Kidney (tissue), 22 donors: ENCODE measurements at regions of chr21 and their contacts with region 1.

Region 1: DNA sequence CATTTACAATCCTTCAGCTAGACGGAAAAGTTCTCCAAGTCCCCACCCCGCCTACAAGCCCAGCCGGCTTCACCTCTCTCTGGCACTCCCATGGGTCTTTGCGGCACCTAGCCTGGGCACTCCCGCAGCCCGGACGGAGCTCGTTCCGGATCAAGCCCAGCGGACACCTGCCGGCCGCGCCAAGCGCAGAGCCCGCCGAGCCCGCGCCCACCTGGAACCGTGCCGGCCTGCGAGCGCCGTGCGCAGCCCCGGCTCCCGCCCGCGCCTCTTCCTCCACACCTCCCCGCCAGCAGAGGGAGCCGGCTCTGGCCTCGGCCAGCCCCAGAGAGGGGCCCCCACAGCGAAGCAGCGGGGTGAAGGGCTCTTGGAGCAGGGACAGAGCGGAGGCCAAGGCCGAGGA is 50.0 kb upstream of the KRTAP19-8 start:
- DNase-seq: no peak
- H3K4me3 ChIP-seq: no peak overlapping the region
- H3K27ac ChIP-seq: no peak overlapping the region
- H3K4me1 ChIP-seq: no peaks in the 10 kb centered on the region
- H3K27me3 ChIP-seq: no peaks in the 10 kb centered on the region
- CTCF ChIP-seq: no peak

Region 2: GRCh38 chr21:30340441-30341241 is 747.7 kb before region 1 on chr21:
- intact Hi-C with region 1: loop called (anchors 10 kb)
- DNase-seq: peak in 3 of 5 donors; percentile 53 to 68 (median 56)
- H3K4me3 ChIP-seq: no peak overlapping the region
- H3K27ac ChIP-seq: no peak overlapping the region
- H3K4me1 ChIP-seq: no peaks in the 10 kb centered on the region
- H3K27me3 ChIP-seq: no peaks in the 10 kb centered on the region
- CTCF ChIP-seq: peak; percentile 82

Region 3: GRCh38 chr21:30468900-30469714 is 619.2 kb before region 1 on chr21:
- intact Hi-C with region 1: no loop called
- DNase-seq: peak in 4 of 5 donors; percentile 42 to 83 (median 64)
- H3K4me3 ChIP-seq: no peak overlapping the region
- H3K27ac ChIP-seq: no peak overlapping the region
- H3K4me1 ChIP-seq: no peaks in the 10 kb centered on the region
- H3K27me3 ChIP-seq: no peaks in the 10 kb centered on the region
- CTCF ChIP-seq: no peak